PC-3 (cell line): ENCODE measurements at regions of chr2 and their contacts with region 1.

Region 1: DNA sequence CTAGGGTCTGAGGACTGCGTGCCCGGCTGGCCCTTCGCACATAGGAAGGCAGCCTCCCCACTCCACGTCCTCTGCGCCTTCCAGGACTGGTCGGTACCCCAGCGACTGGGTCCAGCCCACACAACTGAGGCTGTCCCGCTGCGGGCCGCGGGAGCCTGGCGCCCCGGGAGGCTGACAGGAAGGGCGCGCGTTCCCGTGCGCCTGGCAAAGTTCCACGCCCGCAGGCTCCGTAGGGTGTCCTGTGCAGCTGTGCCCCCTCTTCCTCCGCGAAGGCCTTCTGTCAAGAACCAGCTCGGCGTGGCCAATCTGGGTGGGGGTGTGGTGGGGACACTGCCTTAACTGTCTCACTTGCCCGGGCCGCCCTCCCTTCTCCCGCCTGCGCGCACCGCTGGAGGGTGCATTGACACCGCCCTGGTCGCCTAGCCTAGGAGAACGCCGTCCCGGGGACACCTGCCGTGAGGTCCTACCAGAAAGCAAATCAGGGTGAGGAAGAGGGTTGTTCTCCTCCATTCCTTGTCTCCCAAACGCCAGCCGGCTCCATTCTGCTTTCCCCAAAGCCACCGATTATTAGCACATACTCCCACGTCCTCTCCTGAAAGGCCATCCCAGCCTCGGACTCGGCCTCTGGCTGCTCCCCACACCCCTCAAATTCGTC is 618 bp upstream of the LYPD1 start:
- DNase-seq: peak; percentile 54
- ATAC-seq: peak; percentile 61
- H3K4me3 ChIP-seq: peak overlapping the region; percentile 78
- H3K27ac ChIP-seq: peak overlapping the region; percentile 13; the same call in 1 of the 2 replicates
- H3K4me1 ChIP-seq: peaks cover 24% of the 10 kb centered on the region
- H3K27me3 ChIP-seq: no peaks in the 10 kb centered on the region
- CTCF ChIP-seq: peak; percentile 26; the same call in 1 of the 2 replicates

Region 2: GRCh38 chr2:132267105-132267497 is 403.5 kb before region 1 on chr2:
- CTCF ChIA-PET with region 1: no interaction called
- POLR2A ChIA-PET with region 1: no interaction called
- intact Hi-C with region 1: loop called (anchors 5 kb)
- DNase-seq: no peak
- ATAC-seq: no peak
- H3K4me3 ChIP-seq: no peak overlapping the region
- H3K27ac ChIP-seq: no peak overlapping the region
- H3K4me1 ChIP-seq: peaks cover 8% of the 10 kb centered on the region; the same call in 1 of the 2 replicates
- H3K27me3 ChIP-seq: no peaks in the 10 kb centered on the region
- CTCF ChIP-seq: no peak

Region 3: GRCh38 chr2:132424526-132425121 is 246.0 kb before region 1 on chr2:
- CTCF ChIA-PET with region 1: interaction called, 4 read pairs
- POLR2A ChIA-PET with region 1: no interaction called
- intact Hi-C with region 1: loop called (anchors 1 kb)
- DNase-seq: peak; percentile 50
- ATAC-seq: no peak
- H3K4me3 ChIP-seq: no peak overlapping the region
- H3K27ac ChIP-seq: no peak overlapping the region
- H3K4me1 ChIP-seq: peaks cover 64% of the 10 kb centered on the region
- H3K27me3 ChIP-seq: no peaks in the 10 kb centered on the region
- CTCF ChIP-seq: no peak

Region 4: GRCh38 chr2:132547074-132547687 is 123.4 kb before region 1 on chr2:
- CTCF ChIA-PET with region 1: interaction called, 3 read pairs
- POLR2A ChIA-PET with region 1: interaction called, 3 read pairs
- intact Hi-C with region 1: loop called (anchors 2 kb)
- DNase-seq: peak; percentile 82
- ATAC-seq: peak; percentile 65
- H3K4me3 ChIP-seq: no peak overlapping the region
- H3K27ac ChIP-seq: no peak overlapping the region
- H3K4me1 ChIP-seq: peaks cover 14% of the 10 kb centered on the region
- H3K27me3 ChIP-seq: no peaks in the 10 kb centered on the region
- CTCF ChIP-seq: peak; percentile 85

Region 5: DNA sequence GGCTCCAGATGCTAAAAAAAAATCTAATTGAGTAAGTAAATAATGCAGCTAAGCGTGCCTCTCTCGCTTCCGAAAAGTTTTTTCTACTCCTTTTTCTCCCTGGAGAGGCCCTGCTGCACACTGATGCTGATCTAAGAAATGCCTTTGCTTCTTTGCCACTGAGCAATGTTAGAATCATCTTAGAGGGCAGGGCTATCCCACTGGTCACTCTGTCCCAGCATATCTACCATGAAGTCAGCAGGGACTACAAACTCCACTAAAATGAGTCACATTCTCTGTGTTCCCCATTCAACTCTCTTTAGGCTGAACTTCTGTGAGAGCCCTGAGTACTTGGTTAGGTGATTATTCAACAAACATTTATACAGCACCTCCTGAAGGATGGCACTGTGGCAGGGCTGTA is 126.9 kb after region 1 on chr2:
- CTCF ChIA-PET with region 1: no interaction called
- POLR2A ChIA-PET with region 1: no interaction called
- intact Hi-C with region 1: loop called (anchors 5 kb)
- DNase-seq: peak; percentile 36
- ATAC-seq: peak; percentile 77
- H3K4me3 ChIP-seq: no peak overlapping the region
- H3K27ac ChIP-seq: no peak overlapping the region
- H3K4me1 ChIP-seq: no peaks in the 10 kb centered on the region; the same call in 1 of the 2 replicates
- H3K27me3 ChIP-seq: no peaks in the 10 kb centered on the region
- CTCF ChIP-seq: no peak

Region 6: GRCh38 chr2:132977812-132978529 is 307.3 kb after region 1 on chr2:
- CTCF ChIA-PET with region 1: no interaction called
- POLR2A ChIA-PET with region 1: no interaction called
- intact Hi-C with region 1: loop called (anchors 10 kb)
- DNase-seq: peak; percentile 50
- ATAC-seq: peak; percentile 55
- H3K4me3 ChIP-seq: no peak overlapping the region
- H3K27ac ChIP-seq: no peak overlapping the region
- H3K4me1 ChIP-seq: peaks cover 8% of the 10 kb centered on the region; the same call in 1 of the 2 replicates
- H3K27me3 ChIP-seq: no peaks in the 10 kb centered on the region
- CTCF ChIP-seq: no peak

Region 7: DNA sequence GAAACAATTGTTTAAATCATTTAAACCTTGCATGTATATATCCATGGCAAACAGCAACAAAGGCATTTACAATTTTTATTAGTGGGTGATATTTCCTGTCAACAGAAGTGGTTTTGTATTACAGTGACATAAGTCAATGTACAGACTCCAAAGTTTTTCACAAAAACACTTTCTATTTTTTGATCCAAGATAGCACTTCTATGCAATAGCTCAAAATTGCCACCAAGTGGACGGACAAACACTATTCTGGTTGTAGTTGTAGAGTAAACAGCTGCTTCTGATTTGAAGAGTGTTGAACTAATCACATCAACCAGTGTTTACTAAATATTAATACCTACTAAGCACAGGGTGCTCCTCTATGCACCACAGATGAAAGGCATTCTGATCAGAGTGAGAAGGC is 476.3 kb after region 1 on chr2:
- CTCF ChIA-PET with region 1: interaction called, 3 read pairs
- POLR2A ChIA-PET with region 1: no interaction called
- intact Hi-C with region 1: loop called (anchors 2 kb)
- DNase-seq: peak; percentile 55
- ATAC-seq: peak; percentile 83
- H3K4me3 ChIP-seq: no peak overlapping the region
- H3K27ac ChIP-seq: no peak overlapping the region
- H3K4me1 ChIP-seq: peaks cover 12% of the 10 kb centered on the region; the same call in 1 of the 2 replicates
- H3K27me3 ChIP-seq: no peaks in the 10 kb centered on the region
- CTCF ChIP-seq: peak; percentile 57